ENCODE measurements at regions of chr6 and their contacts with region 1.

Region 1: DNA sequence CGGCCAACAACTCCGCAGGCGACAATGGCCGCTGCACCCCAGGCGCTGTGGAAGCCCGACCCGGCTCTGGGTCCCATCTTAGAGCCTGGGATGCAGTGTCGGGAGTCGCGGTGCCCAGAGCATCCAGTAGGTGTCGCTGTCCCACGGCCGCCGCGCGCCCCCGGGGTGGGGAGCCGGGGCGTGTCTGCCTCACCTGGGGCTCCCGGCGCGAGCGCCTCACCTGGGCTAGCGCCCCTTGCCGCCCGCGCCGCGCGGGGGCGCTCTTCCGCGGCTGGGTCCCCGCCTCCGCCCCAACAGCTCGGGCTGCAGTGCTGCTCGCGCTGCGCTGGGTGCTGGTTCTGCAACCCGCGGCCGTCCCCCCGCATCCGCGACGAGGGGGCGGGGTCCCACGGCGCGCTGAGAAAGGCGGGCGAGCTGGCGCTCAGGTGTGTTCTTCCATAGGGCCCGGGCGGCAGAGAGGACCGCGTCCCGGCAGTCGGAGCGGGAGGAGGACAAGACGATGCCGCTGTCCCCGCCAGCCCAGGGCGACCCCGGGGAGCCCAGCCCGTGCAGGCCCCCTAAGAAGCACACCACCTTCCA is at the start of gene CRYBG1:
- DNase-seq: peak; percentile 81 to 94
- H3K4me3 ChIP-seq: peak within 1 kb of the TSS; percentile 77
- H3K4me3 Mint-ChIP-seq: peak within 1 kb of the TSS; percentile 77
- H3K27ac Mint-ChIP-seq: no peak within 1 kb of the TSS
- H3K4me1 ChIP-seq: no peaks in the 10 kb centered on the region
- H3K4me1 Mint-ChIP-seq: peaks cover 6% of the 10 kb centered on the region
- H3K27me3 ChIP-seq: no peaks in the 10 kb centered on the region
- H3K27me3 Mint-ChIP-seq: peaks cover 11% of the 10 kb centered on the region
- CTCF ChIP-seq: peak; percentile 84 to 96
- total RNA-seq, gene CRYBG1: 10.6 and 13.2 TPM in 2 replicates

Region 2: GRCh38 chr6:106339334-106340029 is 21.0 kb before region 1 on chr6:
- CTCF ChIA-PET with region 1: interaction called, 7 read pairs
- POLR2A ChIA-PET with region 1: no interaction called
- intact Hi-C with region 1: loop called (anchors 1 kb)
- DNase-seq: peak; percentile 56 to 66
- H3K4me3 ChIP-seq: no peak overlapping the region
- H3K4me3 Mint-ChIP-seq: no peak overlapping the region
- H3K27ac Mint-ChIP-seq: no peak overlapping the region
- H3K4me1 ChIP-seq: no peaks in the 10 kb centered on the region
- H3K4me1 Mint-ChIP-seq: peaks cover 6% of the 10 kb centered on the region
- H3K27me3 ChIP-seq: no peaks in the 10 kb centered on the region
- H3K27me3 Mint-ChIP-seq: peaks cover 6% of the 10 kb centered on the region
- CTCF ChIP-seq: peak; percentile 75 to 84

Region 3: DNA sequence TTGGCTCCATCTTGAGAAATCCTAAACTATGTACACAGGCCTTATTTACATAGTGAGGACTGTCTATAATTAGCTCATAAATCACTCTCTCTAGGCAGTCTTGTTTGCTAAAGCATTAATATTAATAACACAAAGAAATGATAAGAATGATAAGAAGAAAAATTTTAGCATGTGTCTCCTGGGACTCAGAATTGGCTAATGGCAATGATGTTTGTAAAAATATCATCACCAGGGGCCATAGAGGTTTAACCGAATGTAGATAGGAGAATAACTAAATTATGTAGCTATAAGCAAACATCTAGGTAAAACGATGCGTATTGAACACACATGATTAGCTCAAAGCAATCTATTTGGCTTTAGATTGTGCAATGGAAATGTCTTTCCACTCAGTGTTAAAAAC is 13.2 kb before region 1 on chr6:
- CTCF ChIA-PET with region 1: interaction called, 15 read pairs
- POLR2A ChIA-PET with region 1: interaction called, 6 read pairs
- intact Hi-C with region 1: loop called (anchors 2 kb)
- DNase-seq: peak in 1 of 2 experiments; percentile 50
- H3K4me3 ChIP-seq: no peak overlapping the region
- H3K4me3 Mint-ChIP-seq: no peak overlapping the region
- H3K27ac Mint-ChIP-seq: no peak overlapping the region
- H3K4me1 ChIP-seq: peaks cover 7% of the 10 kb centered on the region; the same call in 1 of the 2 replicates
- H3K4me1 Mint-ChIP-seq: no peaks in the 10 kb centered on the region
- H3K27me3 ChIP-seq: peaks cover 1% of the 10 kb centered on the region
- H3K27me3 Mint-ChIP-seq: peaks cover 14% of the 10 kb centered on the region
- CTCF ChIP-seq: no peak

Measured in Caco-2 (cell line).